ENCODE measurements at regions of chr20 and their contacts with region 1.

Region 1: GRCh38 chr20:62302341-62303058 is at the start of gene ADRM1:
- DNase-seq: peak; percentile 70
- H3K4me3 ChIP-seq: peak within 1 kb of the TSS; percentile 83 to 100 (median 92)
- H3K27ac ChIP-seq: peak within 1 kb of the TSS; percentile 98 to 100 (median 99)
- H3K4me1 ChIP-seq: peaks cover 31 to 56% (median 38%) of the 10 kb centered on the region in 3 donors
- H3K27me3 ChIP-seq: no peaks in the 10 kb centered on the region
- CTCF ChIP-seq: peak; percentile 90 to 99 (median 98)
- POLR2A ChIP-seq: peak in 3 of 4 donors; percentile 24 to 82 (median 63)
- total RNA-seq, gene ADRM1: 126 to 173 (median 133) TPM

Region 2: GRCh38 chr20:62382306-62383198 is 80.1 kb after region 1 on chr20:
- intact Hi-C with region 1: loop called (anchors 5 kb)
- DNase-seq: peak; percentile 26
- H3K4me3 ChIP-seq: no peak overlapping the region
- H3K27ac ChIP-seq: peak overlapping the region in 3 of 4 donors; percentile 18 to 93 (median 87)
- H3K4me1 ChIP-seq: peaks cover 22 to 80% (median 53%) of the 10 kb centered on the region in 3 donors
- H3K27me3 ChIP-seq: no peaks in the 10 kb centered on the region
- CTCF ChIP-seq: peak; percentile 87 to 96 (median 90)
- POLR2A ChIP-seq: no peak

Measured in esophagus squamous epithelium (tissue), 5 donors.